CD4-positive, alpha-beta memory T cell (primary cell): ENCODE measurements at regions of chrX and their contacts with region 1.

Region 1: DNA sequence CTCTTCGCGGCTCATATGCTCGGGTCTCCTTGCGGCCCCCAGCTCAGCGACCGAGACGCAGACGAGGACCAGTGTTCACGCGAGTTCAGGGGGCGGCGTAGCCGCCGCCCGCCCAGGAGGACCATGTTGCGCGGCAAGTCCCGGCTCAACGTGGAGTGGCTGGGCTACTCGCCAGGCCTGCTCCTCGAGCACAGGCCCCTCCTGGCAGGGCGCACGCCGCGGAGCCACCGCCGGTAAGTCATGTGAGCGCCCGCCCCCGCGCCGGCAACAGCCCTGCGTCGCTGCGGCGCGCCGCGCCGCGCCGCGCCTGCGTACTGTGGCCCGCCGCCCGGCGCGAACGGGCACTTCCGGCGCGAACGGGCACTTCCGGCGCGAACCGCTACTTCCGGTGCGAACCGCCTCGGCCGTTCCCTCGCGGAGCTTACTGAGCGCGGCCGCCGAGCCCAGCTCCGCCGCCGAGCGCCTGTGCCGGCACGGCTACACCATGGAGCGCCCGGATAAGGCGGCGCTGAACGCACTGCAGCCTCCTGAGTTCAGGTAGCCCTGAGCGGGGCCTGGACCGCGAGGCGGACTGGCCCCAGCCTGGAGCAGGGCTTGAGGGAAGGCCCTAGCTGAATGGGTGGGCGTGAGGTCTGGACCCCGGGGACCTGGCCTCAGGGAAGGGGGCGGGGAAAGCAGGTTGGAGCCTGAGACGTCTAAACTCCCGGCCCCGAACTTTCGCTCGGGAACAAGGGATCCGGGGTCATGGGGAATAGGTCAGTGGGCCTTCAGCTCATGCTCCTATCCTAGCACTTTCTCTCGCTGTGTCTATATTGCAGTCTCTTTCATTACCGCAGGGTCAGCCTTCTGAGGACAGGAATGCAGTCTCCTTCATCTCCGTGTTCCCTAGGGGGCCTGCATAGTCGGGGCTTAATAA is at the start of gene VMA21:
- DNase-seq: peak; percentile 81 to 86 (median 83)
- H3K4me3 ChIP-seq: peak within 1 kb of the TSS; percentile 76
- H3K4me3 Mint-ChIP-seq: peak within 1 kb of the TSS; percentile 82 to 92 (median 89)
- H3K27ac ChIP-seq: peak within 1 kb of the TSS; percentile 92
- H3K27ac Mint-ChIP-seq: peak within 1 kb of the TSS; percentile 89 to 98 (median 97)
- H3K4me1 ChIP-seq: peaks cover 68% of the 10 kb centered on the region
- H3K4me1 Mint-ChIP-seq: peaks cover 40 to 83% (median 52%) of the 10 kb centered on the region in 4 donors
- H3K27me3 ChIP-seq: no peaks in the 10 kb centered on the region
- H3K27me3 Mint-ChIP-seq: no peaks in the 10 kb centered on the region
- total RNA-seq, gene VMA21: 28.6 to 29.9 TPM

Region 2: DNA sequence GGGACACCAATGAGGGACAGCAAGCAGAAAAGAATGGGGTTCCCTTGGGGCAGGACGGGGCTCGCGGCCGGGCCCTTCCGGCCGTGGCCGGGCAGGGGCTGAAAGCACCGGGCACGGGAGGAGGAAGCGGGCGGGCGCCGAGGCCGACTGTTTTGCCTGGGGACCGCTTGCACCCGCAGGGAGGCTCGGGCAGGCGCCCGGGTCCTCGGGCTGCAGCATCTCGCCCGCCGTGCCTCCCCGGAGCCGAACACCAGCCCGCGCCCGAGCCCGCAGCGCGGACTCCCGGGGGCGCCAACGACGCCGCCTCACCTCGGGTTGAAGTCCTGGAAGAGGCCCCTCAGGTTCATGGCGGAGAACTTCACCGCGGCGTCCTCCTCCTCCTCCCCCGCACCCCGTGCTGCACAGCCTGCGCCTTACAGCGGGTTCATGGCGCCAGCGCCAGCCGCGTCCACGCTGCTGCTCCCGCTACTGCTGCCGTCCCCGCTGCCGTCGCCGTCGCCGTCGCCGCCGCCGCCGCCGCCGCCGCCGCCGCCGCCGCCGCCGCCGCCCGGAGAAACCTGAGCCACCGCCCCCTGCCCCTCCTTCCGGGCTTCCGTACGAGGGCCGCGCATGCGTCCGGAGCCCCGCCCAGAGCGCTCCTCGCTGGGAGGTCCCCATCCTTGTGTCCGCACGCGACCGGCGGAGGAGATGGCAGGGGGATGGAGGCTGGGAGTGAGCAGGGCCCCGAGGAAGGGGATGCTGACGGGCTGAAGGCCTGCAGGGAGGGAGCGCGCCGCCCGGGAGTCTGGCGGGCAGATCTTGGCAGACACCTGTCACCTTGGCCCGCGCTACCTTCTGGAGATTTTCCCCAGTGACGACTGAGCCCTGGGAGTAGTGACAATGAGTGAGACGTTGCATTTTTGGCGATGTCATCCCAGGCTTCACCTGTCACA is 1765.6 kb before region 1 on chrX and contains the start of gene TMEM185A:
- CTCF ChIA-PET with region 1: no interaction called
- POLR2A ChIA-PET with region 1: no interaction called
- intact Hi-C with region 1: loop called (anchors 5 kb)
- DNase-seq: peak; percentile 70 to 78 (median 75)
- H3K4me3 ChIP-seq: peak within 1 kb of the TSS; percentile 57 to 65
- H3K4me3 Mint-ChIP-seq: peak within 1 kb of the TSS; percentile 89 to 95 (median 92)
- H3K27ac ChIP-seq: peak within 1 kb of the TSS; percentile 49
- H3K27ac Mint-ChIP-seq: peak within 1 kb of the TSS; percentile 83 to 95 (median 89)
- H3K4me1 ChIP-seq: peaks cover 37% of the 10 kb centered on the region
- H3K4me1 Mint-ChIP-seq: peaks cover 22 to 46% (median 34%) of the 10 kb centered on the region in 4 donors
- H3K27me3 ChIP-seq: no peaks in the 10 kb centered on the region
- H3K27me3 Mint-ChIP-seq: peaks cover 2 to 4% of the 10 kb centered on the region in 2 donors
- total RNA-seq, gene TMEM185A: 25.6 to 27.6 TPM

Region 3: GRCh38 chrX:150575416-150575808 is 821.7 kb before region 1 on chrX:
- CTCF ChIA-PET with region 1: no interaction called
- POLR2A ChIA-PET with region 1: no interaction called
- intact Hi-C with region 1: loop called (anchors 5 kb)
- DNase-seq: peak in 4 of 5 donors; percentile 30 to 85 (median 46)
- H3K4me3 ChIP-seq: peak overlapping the region; percentile 41 to 57
- H3K4me3 Mint-ChIP-seq: peak overlapping the region; percentile 78 to 90 (median 84)
- H3K27ac ChIP-seq: peak overlapping the region; percentile 78
- H3K27ac Mint-ChIP-seq: peak overlapping the region; percentile 86 to 100 (median 92)
- H3K4me1 ChIP-seq: peaks cover 88% of the 10 kb centered on the region
- H3K4me1 Mint-ChIP-seq: peaks cover 72 to 90% (median 78%) of the 10 kb centered on the region in 4 donors
- H3K27me3 ChIP-seq: no peaks in the 10 kb centered on the region
- H3K27me3 Mint-ChIP-seq: no peaks in the 10 kb centered on the region

Region 4: GRCh38 chrX:150898343-150899190 is 498.5 kb before region 1 on chrX and contains the start of gene CD99L2:
- CTCF ChIA-PET with region 1: no interaction called
- POLR2A ChIA-PET with region 1: interaction called, 6 read pairs
- intact Hi-C with region 1: loop called (anchors 5 kb)
- DNase-seq: peak; percentile 85 to 86 (median 86)
- H3K4me3 ChIP-seq: peak within 1 kb of the TSS; percentile 47 to 56
- H3K4me3 Mint-ChIP-seq: peak within 1 kb of the TSS; percentile 87 to 95 (median 91)
- H3K27ac ChIP-seq: peak within 1 kb of the TSS; percentile 66
- H3K27ac Mint-ChIP-seq: peak within 1 kb of the TSS; percentile 53 to 94 (median 84)
- H3K4me1 ChIP-seq: peaks cover 9% of the 10 kb centered on the region
- H3K4me1 Mint-ChIP-seq: peaks cover 3 to 16% (median 5%) of the 10 kb centered on the region in 4 donors
- H3K27me3 ChIP-seq: no peaks in the 10 kb centered on the region
- H3K27me3 Mint-ChIP-seq: no peaks in the 10 kb centered on the region
- total RNA-seq, gene CD99L2: 15.5 to 17.3 TPM

Region 5: DNA sequence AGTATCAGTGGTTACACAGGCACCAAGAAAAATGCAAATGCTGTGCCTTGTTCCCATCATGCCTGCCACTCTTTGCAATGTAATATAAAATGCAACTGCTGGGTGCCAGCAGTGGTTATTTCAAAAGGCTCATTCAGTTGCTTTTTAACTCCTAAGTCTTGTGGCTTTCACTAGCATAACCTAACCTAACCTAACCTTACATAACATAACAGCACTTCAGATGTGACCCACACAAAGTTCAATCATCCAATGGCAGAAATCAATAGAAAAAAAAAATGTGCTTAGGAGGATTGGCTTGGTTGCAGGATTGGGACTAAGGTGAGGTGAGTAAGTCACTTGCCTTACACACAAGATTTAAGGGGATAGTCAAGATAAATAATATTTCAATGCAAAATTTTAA is 60.3 kb before region 1 on chrX:
- CTCF ChIA-PET with region 1: no interaction called
- POLR2A ChIA-PET with region 1: no interaction called
- intact Hi-C with region 1: no loop called
- DNase-seq: no peak
- H3K4me3 ChIP-seq: no peak overlapping the region
- H3K4me3 Mint-ChIP-seq: no peak overlapping the region
- H3K27ac ChIP-seq: no peak overlapping the region
- H3K27ac Mint-ChIP-seq: no peak overlapping the region
- H3K4me1 ChIP-seq: no peaks in the 10 kb centered on the region
- H3K4me1 Mint-ChIP-seq: no peaks in the 10 kb centered on the region
- H3K27me3 ChIP-seq: no peaks in the 10 kb centered on the region
- H3K27me3 Mint-ChIP-seq: no peaks in the 10 kb centered on the region